GM12878 (cell line): ENCODE measurements at regions of chr11 and their contacts with region 1.

Region 1: DNA sequence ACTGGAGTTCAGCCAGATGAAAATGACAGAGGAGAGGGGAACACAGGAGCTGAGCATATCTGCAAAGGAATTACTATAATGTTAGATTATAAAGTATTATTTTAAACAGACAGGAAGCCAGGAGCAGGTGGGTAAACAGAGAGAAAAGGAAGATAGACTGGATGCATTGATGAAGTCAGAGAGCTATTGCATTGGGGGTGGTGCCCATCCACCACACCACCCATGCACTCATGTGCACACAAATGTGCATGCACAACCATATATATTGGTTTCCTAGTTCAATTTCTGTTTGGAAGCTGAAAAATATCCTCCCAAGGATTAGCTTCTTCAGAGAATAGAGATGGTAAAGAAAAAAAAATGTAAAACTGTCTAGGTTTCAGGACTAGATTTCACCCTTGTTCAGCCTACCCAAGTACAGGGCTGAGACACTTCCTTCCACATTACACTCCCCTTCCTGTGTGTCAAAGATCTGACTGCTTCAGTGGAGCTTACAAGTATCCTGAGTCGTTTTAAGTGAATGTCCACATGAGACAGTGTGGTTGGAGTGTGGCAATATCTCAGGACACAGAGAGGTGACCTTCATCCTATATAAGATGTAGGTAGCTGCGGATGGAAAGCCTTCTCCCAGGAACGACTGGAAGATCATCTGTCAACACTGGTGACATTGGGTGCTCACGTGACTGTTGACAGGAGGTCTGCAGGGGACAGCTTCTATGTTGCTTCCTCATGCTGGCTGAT is 12.2 kb upstream of the SMPD1 start:
- DNase-seq: no peak
- ATAC-seq: peak; percentile 51
- H3K4me3 ChIP-seq: no peak overlapping the region
- H3K27ac ChIP-seq: no peak overlapping the region
- H3K4me1 ChIP-seq: peaks cover 6% of the 10 kb centered on the region; the same call in 1 of the 2 replicates
- H3K27me3 ChIP-seq: no peaks in the 10 kb centered on the region
- CTCF ChIP-seq: no peak
- EP300 ChIP-seq: no peak
- POLR2A ChIP-seq: no peak
- RAD21 ChIP-seq: no peak

Region 2: DNA sequence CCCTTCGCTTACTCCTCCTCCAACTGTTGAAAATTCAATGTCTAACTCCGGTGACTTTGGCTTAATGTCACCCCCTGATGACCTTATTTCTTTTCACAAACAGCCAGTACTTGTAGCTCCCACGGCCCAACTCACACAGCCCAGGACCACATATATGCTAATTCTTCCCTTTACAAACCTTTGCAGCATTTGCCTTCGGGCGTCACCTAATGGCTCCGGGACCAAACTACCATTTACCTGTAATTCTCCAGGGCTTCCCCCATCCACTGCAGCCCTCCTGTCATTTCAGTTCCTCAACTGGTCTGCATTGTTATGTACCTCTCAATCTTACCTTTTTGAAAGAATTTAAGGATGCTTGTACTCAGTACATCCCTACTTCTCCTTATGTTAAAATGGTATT is 300.3 kb before region 1 on chr11:
- CTCF ChIA-PET with region 1: no interaction called
- POLR2A ChIA-PET with region 1: no interaction called
- RAD21 ChIA-PET with region 1: no interaction called
- SMC1A ChIA-PET with region 1: no interaction called
- in situ Hi-C with region 1: no loop called
- intact Hi-C with region 1: no loop called
- DNase-seq: no peak
- ATAC-seq: no peak
- H3K4me3 ChIP-seq: no peak overlapping the region
- H3K27ac ChIP-seq: no peak overlapping the region
- H3K4me1 ChIP-seq: no peaks in the 10 kb centered on the region
- H3K27me3 ChIP-seq: no peaks in the 10 kb centered on the region
- CTCF ChIP-seq: no peak
- EP300 ChIP-seq: no peak
- POLR2A ChIP-seq: no peak
- RAD21 ChIP-seq: no peak

Region 3: DNA sequence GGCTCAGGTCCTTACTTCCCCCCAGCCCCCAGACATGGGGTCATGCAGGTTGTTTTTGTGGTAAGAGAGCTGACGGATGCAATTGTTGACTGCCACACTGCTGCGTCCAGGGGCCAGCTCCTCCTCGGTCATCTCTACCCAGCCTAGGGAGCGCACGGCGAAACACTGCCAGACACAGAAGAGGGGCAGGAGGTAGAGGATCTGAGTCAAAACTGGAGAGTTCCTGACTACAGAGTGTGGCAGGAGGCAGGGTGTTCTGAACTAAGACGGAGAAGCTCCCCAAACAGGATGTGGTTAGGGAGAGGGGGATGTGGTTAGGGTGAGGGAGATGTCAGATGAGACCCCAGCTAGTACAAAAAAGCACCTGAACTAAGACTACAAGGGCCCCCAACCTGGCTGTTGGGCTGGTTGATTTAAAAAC is 24.5 kb after region 1 on chr11:
- CTCF ChIA-PET with region 1: interaction called, 42 read pairs
- POLR2A ChIA-PET with region 1: interaction called, 5 read pairs
- RAD21 ChIA-PET with region 1: interaction called, 24 read pairs
- SMC1A ChIA-PET with region 1: interaction called, 21 read pairs
- in situ Hi-C with region 1: no loop called
- intact Hi-C with region 1: no loop called
- DNase-seq: peak; percentile 76
- ATAC-seq: peak; percentile 94
- H3K4me3 ChIP-seq: peak overlapping the region; percentile 54; the same call in 1 of the 2 replicates
- H3K27ac ChIP-seq: peak overlapping the region; percentile 16
- H3K4me1 ChIP-seq: peaks cover 25% of the 10 kb centered on the region
- H3K27me3 ChIP-seq: no peaks in the 10 kb centered on the region
- CTCF ChIP-seq: no peak
- EP300 ChIP-seq: peak; percentile 47 to 65; a peak in 2 of 4 replicates
- POLR2A ChIP-seq: peak; percentile 58
- RAD21 ChIP-seq: no peak

Region 4: DNA sequence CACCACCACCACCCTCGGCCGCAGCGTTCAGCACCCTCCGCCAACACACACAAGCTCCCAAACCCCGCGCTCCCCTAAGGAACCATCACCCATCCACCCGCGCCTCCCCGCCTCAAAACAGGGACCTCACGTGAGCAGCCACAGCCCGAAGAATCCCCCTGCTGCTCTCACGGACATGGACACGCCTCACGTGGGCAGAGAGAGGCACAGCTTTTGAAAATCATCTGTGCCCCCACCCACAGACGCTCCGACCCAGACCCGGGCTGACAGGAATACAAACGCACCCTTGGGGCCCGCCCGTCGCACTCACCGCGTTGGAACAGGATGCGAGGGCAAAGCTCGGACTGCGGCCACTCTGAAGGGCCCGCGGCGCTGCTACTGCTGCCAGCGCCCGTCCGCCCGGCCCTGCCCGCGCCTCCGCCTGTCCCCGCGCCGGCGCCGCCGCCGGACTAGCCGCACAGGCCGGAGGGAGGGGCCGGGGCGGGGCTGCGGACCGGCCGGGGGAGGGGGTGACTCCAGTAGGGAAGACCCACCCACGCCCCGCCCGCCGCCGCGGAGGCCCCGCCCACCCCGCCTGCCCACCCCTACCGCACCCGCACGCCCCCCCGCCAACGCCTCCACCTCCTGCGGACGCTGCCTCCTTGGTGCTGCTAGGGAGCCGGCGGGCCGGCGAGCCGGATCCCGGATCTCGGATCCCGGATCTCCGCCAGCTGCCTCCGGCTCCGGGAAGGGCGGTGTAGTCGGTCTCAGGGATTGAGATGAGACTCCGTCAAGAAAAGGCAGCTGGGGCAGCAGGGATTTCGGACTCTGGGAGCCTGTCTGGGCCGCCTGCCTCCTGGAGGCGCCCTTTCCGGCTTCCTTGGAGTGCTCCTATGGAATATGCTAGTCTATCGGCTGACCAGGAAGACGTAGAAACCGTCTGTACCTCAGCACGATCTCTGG is 95.7 kb after region 1 on chr11 and contains the start of gene TRIM3:
- CTCF ChIA-PET with region 1: interaction called, 19 read pairs
- POLR2A ChIA-PET with region 1: no interaction called
- RAD21 ChIA-PET with region 1: interaction called, 21 read pairs
- SMC1A ChIA-PET with region 1: interaction called, 8 read pairs
- in situ Hi-C with region 1: no loop called
- intact Hi-C with region 1: no loop called
- DNase-seq: no peak
- ATAC-seq: peak; percentile 85
- H3K4me3 ChIP-seq: peak within 1 kb of the TSS; percentile 75
- H3K27ac ChIP-seq: no peak within 1 kb of the TSS
- H3K4me1 ChIP-seq: peaks cover 15% of the 10 kb centered on the region
- H3K27me3 ChIP-seq: no peaks in the 10 kb centered on the region
- CTCF ChIP-seq: no peak
- EP300 ChIP-seq: no peak
- POLR2A ChIP-seq: peak; percentile 72
- RAD21 ChIP-seq: no peak
- polyA plus RNA-seq, gene TRIM3: 0.34 to 0.55 TPM

Region 5: GRCh38 chr11:6505577-6506240 is 127.6 kb after region 1 on chr11:
- CTCF ChIA-PET with region 1: interaction called, 177 read pairs
- POLR2A ChIA-PET with region 1: no interaction called
- RAD21 ChIA-PET with region 1: interaction called, 76 read pairs
- SMC1A ChIA-PET with region 1: interaction called, 101 read pairs
- in situ Hi-C with region 1: no loop called
- intact Hi-C with region 1: loop called (anchors 1 kb)
- DNase-seq: no peak
- ATAC-seq: peak; percentile 91
- H3K4me3 ChIP-seq: no peak overlapping the region
- H3K27ac ChIP-seq: no peak overlapping the region
- H3K4me1 ChIP-seq: no peaks in the 10 kb centered on the region
- H3K27me3 ChIP-seq: no peaks in the 10 kb centered on the region
- CTCF ChIP-seq: peak; percentile 66 to 71 (median 69); a peak in 5 of 6 replicates
- EP300 ChIP-seq: no peak
- POLR2A ChIP-seq: no peak
- RAD21 ChIP-seq: peak; percentile 58

Region 6: DNA sequence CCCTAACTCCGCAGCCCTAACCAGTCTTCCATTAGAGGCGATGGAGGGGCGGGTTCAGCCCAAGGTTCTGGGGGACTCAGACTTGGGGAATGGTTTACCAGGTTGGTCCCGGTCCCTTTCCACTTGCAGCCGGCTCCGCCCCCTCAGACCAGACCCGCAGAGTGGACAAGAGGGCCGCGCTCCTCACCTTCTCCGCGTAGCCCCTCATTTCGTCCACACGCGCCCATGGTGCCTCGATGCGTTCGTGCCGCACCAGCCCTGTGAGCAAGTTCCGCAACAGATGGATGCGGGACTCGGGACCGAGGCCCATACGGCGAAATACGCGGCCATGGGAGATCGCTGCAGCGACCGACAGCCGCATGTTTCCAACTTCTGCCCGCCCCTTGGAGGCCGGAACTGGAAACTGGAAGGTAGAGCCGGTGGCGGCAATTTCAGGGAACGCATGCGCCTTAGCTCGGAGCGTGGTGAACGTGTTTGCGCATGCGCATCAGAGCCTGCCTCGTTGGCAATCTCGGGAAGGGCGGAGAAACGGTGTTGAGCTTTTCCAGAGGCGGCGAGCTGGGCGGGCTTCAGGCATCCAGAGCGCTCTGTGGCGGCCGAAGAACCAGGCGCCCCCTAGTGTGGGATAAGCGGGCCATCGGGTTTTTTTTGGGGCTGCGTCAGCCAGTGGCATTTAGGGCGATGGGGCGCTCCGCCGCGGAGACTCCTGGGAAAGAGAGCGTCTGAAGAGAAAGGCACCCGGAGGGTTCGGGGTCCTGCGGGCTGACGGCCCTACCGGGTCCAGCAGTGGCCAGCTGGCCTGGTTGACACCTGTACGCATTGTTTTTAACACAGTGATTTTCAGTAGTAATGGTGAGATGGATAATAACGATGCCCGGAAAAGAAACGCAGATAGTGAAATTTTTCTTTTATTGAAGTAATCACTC is 305.1 kb after region 1 on chr11 and contains the start of gene MRPL17:
- CTCF ChIA-PET with region 1: interaction called, 19 read pairs
- POLR2A ChIA-PET with region 1: interaction called, 3 read pairs
- RAD21 ChIA-PET with region 1: interaction called, 23 read pairs
- SMC1A ChIA-PET with region 1: interaction called, 12 read pairs
- in situ Hi-C with region 1: loop called (anchors 10 kb)
- intact Hi-C with region 1: loop called (anchors 1 kb)
- DNase-seq: peak; percentile 99
- ATAC-seq: peak; percentile 94
- H3K4me3 ChIP-seq: peak within 1 kb of the TSS; percentile 97
- H3K27ac ChIP-seq: peak within 1 kb of the TSS; percentile 83
- H3K4me1 ChIP-seq: 0 out of 2 replicates have a peak, but pooled peaks cover 2% of the 10 kb centered on the region
- H3K27me3 ChIP-seq: no peaks in the 10 kb centered on the region
- CTCF ChIP-seq: peak; percentile 82 to 96 (median 84); a peak in 5 of 6 replicates
- EP300 ChIP-seq: no peak
- POLR2A ChIP-seq: peak; percentile 98
- RAD21 ChIP-seq: peak; percentile 66
- polyA plus RNA-seq, gene MRPL17: 170 to 171 TPM